ENCODE measurements at regions of chr11 and their contacts with region 1.

Region 1: DNA sequence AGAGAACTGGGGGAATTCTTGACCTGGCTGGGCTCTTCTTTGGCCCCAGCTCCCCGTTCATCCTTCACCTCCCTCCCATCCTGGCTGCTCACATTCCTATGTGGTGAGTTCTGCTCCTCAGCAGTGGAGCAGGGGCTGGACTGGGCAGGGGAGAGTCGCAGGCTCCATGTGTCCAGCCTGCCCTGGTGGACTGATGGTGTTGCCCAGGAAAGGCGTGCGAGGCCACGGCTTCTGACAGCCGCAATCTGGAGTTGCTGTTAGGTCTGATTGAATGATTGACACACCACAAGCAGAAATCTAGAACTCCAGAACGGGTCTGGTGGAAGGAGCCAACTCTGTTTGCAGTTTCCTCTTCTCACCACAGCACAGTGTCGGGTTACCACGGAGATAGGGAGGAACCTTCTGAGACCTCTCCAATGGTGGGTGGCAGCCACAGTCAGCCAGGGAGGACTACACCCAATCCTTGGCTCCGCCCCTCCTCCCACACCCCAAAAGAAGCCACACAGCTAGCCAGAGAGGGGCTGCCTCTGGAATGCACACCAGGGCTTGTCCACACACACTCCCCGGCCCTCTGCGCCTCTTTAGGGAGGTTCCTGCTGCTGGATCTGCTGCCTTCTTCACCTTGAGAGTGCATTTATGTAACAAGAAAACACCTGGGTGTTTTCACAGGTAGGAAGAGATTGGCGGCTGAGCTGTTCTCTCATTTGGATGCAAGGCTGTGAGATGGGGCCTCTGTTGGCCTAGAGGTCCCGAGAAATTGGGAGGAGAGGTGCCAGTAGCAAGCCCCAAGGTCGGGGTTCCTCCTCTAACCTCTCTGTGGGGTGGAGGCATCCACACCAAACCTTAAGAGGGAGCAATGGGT is 56.4 kb upstream of the CD44 start:
- DNase-seq: peak; percentile 95 to 98 (median 97)
- H3K4me3 ChIP-seq: peak overlapping the region in 1 of 3 experiments; percentile 43
- H3K4me3 Mint-ChIP-seq: peak overlapping the region; percentile 43 to 80
- H3K27ac ChIP-seq: peak overlapping the region; percentile 99 to 100
- H3K27ac Mint-ChIP-seq: peak overlapping the region; percentile 97 to 100 (median 99)
- H3K4me1 ChIP-seq: peaks cover 57 to 58% of the 10 kb centered on the region in 2 donors
- H3K4me1 Mint-ChIP-seq: peaks cover 70% of the 10 kb centered on the region
- H3K27me3 ChIP-seq: no peaks in the 10 kb centered on the region
- H3K27me3 Mint-ChIP-seq: peaks cover 0 to 2% (median 0%) of the 10 kb centered on the region in 3 donors
- CTCF ChIP-seq: no peak

Region 2: DNA sequence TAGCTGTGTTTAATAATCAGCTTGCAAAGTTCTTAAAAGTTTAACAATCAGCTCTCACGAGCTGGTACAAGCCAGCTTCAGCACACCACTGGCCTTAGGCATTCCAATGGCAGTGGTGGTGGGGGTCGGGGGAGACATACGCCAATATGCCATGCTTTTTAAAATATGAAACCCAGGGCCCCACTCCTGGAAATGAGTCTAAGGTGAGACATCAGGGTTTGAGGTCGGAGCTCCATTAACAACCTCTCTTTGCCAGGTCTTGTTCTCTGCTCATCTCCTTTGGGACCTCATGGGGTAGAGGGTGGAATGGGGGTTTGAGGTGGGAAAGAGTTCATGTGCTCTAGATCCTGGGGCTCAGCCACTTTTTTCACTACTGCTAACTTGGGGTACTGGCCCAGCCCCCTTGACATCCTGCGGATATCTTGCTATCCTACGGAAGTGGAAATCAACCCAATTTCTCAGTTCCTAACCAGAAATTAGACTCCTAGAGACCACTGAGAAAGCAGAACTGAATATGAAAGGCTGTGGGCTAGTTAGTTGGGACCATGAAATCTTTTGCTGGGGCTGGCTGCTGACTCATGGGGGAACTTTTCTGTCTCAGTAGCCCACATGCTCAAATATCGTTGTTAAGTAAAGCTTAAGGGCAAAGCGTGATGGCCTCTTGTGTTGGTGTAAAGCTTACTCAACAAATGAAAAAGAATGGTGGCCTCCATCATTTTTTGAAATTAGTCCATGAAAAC is 76.0 kb before region 1 on chr11:
- intact Hi-C with region 1: loop called in 1 of 2 experiments (anchors 5 kb)
- DNase-seq: peak; percentile 86 to 91 (median 89)
- H3K4me3 ChIP-seq: no peak overlapping the region
- H3K4me3 Mint-ChIP-seq: no peak overlapping the region
- H3K27ac ChIP-seq: peak overlapping the region in 1 of 2 donors; percentile 63
- H3K27ac Mint-ChIP-seq: peak overlapping the region; percentile 62 to 94 (median 83)
- H3K4me1 ChIP-seq: peaks cover 14 to 20% of the 10 kb centered on the region in 2 donors
- H3K4me1 Mint-ChIP-seq: peaks cover 23% of the 10 kb centered on the region
- H3K27me3 ChIP-seq: no peaks in the 10 kb centered on the region
- H3K27me3 Mint-ChIP-seq: no peaks in the 10 kb centered on the region
- CTCF ChIP-seq: no peak

Region 3: DNA sequence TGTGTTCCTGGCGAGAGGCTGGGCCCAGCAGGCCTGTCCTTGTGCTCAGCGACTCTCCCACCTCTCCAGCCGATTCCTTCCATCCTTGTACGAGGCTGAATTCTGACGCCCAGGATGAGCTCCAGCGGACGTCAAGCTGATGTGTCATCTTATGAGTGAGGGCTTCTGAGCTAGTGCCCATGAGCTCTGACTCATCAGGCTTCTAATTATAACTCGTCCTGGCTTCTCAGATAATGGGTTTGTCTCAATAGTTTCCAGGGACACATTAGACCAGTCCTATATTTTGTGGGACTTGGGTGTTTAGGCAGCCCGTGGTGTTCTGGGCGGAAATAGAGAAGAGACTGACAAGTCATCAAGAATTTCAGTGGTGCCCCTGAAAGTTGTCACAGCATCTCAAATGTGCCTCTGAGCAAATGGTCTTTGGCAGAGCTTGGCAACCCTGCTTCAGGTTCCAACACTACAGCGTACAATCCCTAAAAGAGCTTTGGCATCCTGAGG is 51.8 kb before region 1 on chr11:
- intact Hi-C with region 1: loop called (anchors 2 kb)
- DNase-seq: peak; percentile 93 to 98 (median 97)
- H3K4me3 ChIP-seq: peak overlapping the region in 2 of 3 experiments; percentile 11 to 12
- H3K4me3 Mint-ChIP-seq: peak overlapping the region; percentile 74 to 91
- H3K27ac ChIP-seq: peak overlapping the region; percentile 79 to 98
- H3K27ac Mint-ChIP-seq: peak overlapping the region; percentile 94 to 100 (median 99)
- H3K4me1 ChIP-seq: peaks cover 33 to 35% of the 10 kb centered on the region in 2 donors
- H3K4me1 Mint-ChIP-seq: peaks cover 56% of the 10 kb centered on the region
- H3K27me3 ChIP-seq: no peaks in the 10 kb centered on the region
- H3K27me3 Mint-ChIP-seq: peaks cover 0 to 2% (median 0%) of the 10 kb centered on the region in 3 donors
- CTCF ChIP-seq: no peak

Region 4: GRCh38 chr11:35144136-35144741 is 61.7 kb after region 1 on chr11:
- intact Hi-C with region 1: loop called in 1 of 2 experiments (anchors 2 kb)
- DNase-seq: peak; percentile 75 to 95 (median 87)
- H3K4me3 ChIP-seq: peak overlapping the region; percentile 15 to 93 (median 15)
- H3K4me3 Mint-ChIP-seq: peak overlapping the region; percentile 64 to 73
- H3K27ac ChIP-seq: peak overlapping the region; percentile 67 to 98
- H3K27ac Mint-ChIP-seq: peak overlapping the region; percentile 84 to 98 (median 87)
- H3K4me1 ChIP-seq: peaks cover 53 to 78% of the 10 kb centered on the region in 2 donors
- H3K4me1 Mint-ChIP-seq: peaks cover 77% of the 10 kb centered on the region
- H3K27me3 ChIP-seq: no peaks in the 10 kb centered on the region
- H3K27me3 Mint-ChIP-seq: no peaks in the 10 kb centered on the region
- CTCF ChIP-seq: no peak

Region 5: GRCh38 chr11:35214792-35215193 is 132.2 kb after region 1 on chr11:
- intact Hi-C with region 1: loop called in 1 of 2 experiments (anchors 5 kb)
- DNase-seq: peak; percentile 92 to 98 (median 93)
- H3K4me3 ChIP-seq: peak overlapping the region in 1 of 3 experiments; percentile 30
- H3K4me3 Mint-ChIP-seq: peak overlapping the region in 1 of 2 donors; percentile 35
- H3K27ac ChIP-seq: peak overlapping the region; percentile 16 to 97
- H3K27ac Mint-ChIP-seq: peak overlapping the region; percentile 95 to 99 (median 98)
- H3K4me1 ChIP-seq: peaks cover 62 to 74% of the 10 kb centered on the region in 2 donors
- H3K4me1 Mint-ChIP-seq: peaks cover 71% of the 10 kb centered on the region
- H3K27me3 ChIP-seq: no peaks in the 10 kb centered on the region
- H3K27me3 Mint-ChIP-seq: no peaks in the 10 kb centered on the region
- CTCF ChIP-seq: no peak

Measured in CD14-positive monocyte (primary cell).